A549 (cell line): ENCODE measurements at regions of chr16 and their contacts with region 1.

Region 1: DNA sequence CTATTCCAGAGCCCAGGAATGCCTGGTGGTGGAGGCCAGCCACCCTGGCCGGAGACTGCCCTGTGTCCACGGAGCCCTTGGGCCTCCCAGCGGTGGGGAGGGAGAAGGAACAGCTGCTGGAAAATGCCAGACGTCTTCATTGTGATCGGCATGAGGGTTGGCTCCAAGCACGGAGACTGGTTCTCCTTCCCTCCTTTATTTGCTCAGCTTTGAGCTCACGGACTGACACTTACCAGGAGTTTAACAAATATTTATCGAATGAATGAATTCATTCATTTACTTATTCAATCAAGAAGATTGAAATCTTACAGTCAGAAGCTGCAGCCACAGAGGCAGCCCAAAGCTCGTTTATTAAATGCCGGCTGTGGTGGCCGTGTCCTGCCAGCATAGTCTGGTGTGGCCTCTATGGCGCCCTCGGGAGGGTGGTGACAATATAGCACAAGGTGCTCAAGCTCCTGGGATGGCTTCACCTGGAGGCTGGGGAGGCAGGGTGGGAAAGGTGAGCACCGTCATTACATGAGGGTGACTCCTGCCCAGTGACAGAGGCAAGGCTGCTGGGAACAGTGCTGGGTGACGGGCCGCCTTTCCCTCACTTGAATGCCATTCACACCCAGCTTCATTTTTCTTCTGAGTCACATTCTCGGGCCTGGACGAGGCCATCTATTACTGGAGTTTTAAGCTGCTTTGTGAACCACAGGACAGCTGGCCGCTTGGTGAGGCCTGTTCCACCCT is 31.0 kb upstream of the JPH3 start:
- DNase-seq: peak; percentile 76 to 84
- ATAC-seq: peak; percentile 95 to 96
- H3K4me3 ChIP-seq: no peak overlapping the region
- H3K27ac ChIP-seq: peak overlapping the region in 1 of 2 experiments; percentile 49; a peak in 3 of 6 replicates
- H3K4me1 ChIP-seq: peaks cover 14% of the 10 kb centered on the region
- CTCF ChIP-seq: peak; percentile 42; the same call in 2 of the 3 replicates
- EP300 ChIP-seq: no peak
- POLR2A ChIP-seq: no peak
- RAD21 ChIP-seq: peak; percentile 61 to 62

Region 2: DNA sequence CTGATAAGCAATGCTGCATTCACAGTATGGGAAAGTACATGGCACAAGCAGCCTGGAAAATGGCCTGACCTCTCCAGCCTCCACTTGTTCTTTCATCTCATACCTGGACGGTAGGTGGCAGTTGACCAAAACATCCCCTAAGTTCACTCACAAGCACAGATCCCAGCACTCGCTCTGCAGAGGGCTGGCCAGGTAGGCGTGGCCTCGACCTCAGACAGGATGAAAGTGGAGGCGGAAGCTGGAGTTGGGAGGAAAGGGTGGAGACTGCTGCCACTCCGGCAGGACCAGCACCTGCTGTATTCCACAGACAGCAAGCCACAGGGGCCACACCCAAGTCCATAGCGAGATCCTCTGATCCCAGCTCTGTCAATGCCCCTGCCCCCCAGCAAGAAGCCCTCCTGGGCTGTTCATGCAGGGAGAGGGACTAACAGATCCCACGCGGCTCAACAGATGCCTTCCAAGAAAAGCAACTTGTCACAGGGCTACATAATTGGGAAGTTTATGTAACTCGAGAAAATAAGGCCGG is 109.8 kb before region 1 on chr16:
- CTCF ChIA-PET with region 1: interaction called, 25 read pairs
- POLR2A ChIA-PET with region 1: no interaction called
- DNase-seq: peak; percentile 94
- ATAC-seq: peak; percentile 98 to 99
- H3K4me3 ChIP-seq: peak overlapping the region; percentile 40
- H3K27ac ChIP-seq: peak overlapping the region; percentile 72 to 86
- H3K4me1 ChIP-seq: peaks cover 40% of the 10 kb centered on the region
- CTCF ChIP-seq: peak; percentile 67
- EP300 ChIP-seq: no peak
- POLR2A ChIP-seq: 0 out of 2 replicates have a peak, but pooled peaks have one; percentile 11
- RAD21 ChIP-seq: peak; percentile 39 to 42; a peak in 3 of 5 replicates

Region 3: GRCh38 chr16:87540945-87541877 is 30.1 kb before region 1 on chr16:
- CTCF ChIA-PET with region 1: interaction called, 16 read pairs
- POLR2A ChIA-PET with region 1: no interaction called
- DNase-seq: no peak
- ATAC-seq: no peak; a peak in 2 of 6 replicates
- H3K4me3 ChIP-seq: no peak overlapping the region
- H3K27ac ChIP-seq: no peak overlapping the region
- H3K4me1 ChIP-seq: no peaks in the 10 kb centered on the region
- CTCF ChIP-seq: no peak
- EP300 ChIP-seq: no peak
- POLR2A ChIP-seq: no peak
- RAD21 ChIP-seq: no peak

Region 4: DNA sequence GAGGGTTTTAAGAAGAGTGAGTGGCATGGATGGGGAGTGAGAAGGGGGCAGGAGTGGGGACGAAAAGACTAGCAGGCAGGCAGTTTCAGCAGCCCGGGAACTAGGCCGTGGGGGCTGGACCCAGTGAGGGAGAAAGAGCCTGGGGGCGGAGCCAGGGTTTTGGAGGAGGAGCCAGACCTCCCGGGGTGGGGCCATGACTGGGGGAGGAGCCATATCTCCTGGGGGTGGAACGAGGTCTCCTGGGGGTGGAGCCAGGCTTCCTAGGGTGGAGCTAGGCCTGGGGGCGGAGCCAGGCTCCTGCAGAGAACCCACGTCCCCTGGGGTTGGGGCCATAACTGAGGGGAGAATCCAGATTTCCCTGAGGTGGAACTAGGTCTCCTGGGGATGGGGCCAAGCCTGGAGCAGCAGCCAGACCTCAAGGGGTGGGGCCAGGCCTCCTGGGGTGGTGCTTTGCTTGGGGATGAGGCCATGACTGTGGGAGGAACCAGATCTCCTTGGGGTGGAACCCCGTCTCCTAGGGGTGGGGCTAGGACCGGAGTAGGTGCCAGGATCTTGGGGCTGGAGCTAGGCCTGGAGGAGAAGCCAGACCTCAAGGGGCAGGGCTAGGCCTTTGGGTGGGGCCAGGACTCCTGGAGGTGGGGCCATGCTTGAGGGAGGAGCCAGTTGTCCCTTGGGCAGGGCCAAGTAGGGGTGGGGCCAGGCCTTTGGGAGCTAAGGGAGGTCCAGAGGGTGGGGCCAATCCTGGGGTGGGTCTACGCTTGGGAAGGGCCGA is 10.7 kb before region 1 on chr16:
- CTCF ChIA-PET with region 1: interaction called, 19 read pairs
- POLR2A ChIA-PET with region 1: interaction called, 3 read pairs
- DNase-seq: peak; percentile 65 to 83
- ATAC-seq: peak; percentile 70 to 93
- H3K4me3 ChIP-seq: no peak overlapping the region
- H3K27ac ChIP-seq: peak overlapping the region in 1 of 2 experiments; percentile 7; a peak in 1 of 6 replicates
- H3K4me1 ChIP-seq: no peaks in the 10 kb centered on the region
- CTCF ChIP-seq: no peak
- EP300 ChIP-seq: no peak
- POLR2A ChIP-seq: no peak
- RAD21 ChIP-seq: no peak

Region 5: DNA sequence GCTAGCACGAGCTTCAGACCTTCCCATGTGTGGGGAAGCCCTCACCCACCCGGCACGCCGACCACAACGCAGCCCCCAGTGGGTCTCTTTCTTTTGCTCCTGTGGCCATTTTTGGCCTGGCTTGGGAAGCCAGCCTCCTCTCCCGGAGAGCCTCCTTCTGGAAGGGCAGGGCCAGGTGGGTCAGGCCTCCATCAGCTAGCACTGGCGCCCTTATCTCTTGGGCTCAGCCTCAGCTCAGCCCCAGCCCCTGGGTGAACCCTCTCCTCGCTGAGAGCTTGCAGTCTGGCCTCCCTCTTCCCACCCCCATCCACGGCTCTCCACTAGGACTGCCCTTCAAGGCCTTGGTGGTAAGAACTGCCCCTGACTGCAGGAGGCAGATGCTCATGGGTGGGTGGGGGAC is 16.3 kb after region 1 on chr16:
- CTCF ChIA-PET with region 1: interaction called, 25 read pairs
- POLR2A ChIA-PET with region 1: interaction called, 6 read pairs
- DNase-seq: no peak
- ATAC-seq: no peak
- H3K4me3 ChIP-seq: no peak overlapping the region
- H3K27ac ChIP-seq: no peak overlapping the region
- H3K4me1 ChIP-seq: peaks cover 14% of the 10 kb centered on the region
- CTCF ChIP-seq: no peak
- EP300 ChIP-seq: no peak
- POLR2A ChIP-seq: no peak
- RAD21 ChIP-seq: no peak